ENCODE measurements at regions of chr4 and their contacts with region 1.

Region 1: DNA sequence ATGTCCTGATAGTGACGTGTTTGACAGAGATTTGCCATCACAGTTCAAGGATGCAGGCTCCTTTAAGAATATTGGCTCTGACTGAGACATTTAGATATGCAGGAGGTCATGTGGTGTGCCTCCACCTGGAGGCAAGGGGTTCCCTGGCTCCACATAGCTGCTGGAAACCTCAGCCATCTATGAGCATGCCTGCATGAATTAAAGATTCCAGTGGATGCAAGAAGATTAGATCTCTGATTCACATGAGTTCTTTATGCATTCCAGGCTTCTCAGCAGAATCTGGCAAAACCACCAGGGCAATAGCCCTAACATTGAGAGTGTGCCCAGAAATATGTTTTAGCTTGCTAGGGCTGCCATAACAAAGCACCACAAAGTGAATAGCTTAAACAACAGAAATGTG is 298.5 kb upstream of the AADAT start:
- DNase-seq: no peak
- H3K4me3 ChIP-seq: no peak overlapping the region
- H3K27ac ChIP-seq: no peak overlapping the region
- H3K4me1 ChIP-seq: no peaks in the 10 kb centered on the region
- H3K27me3 ChIP-seq: no peaks in the 10 kb centered on the region
- CTCF ChIP-seq: no peak
- EP300 ChIP-seq: no peak
- POLR2A ChIP-seq: no peak

Region 2: GRCh38 chr4:170374770-170375169 is 13.5 kb before region 1 on chr4:
- intact Hi-C with region 1: loop called in 1 of 4 experiments (anchors 2 kb)
- DNase-seq: no peak
- H3K4me3 ChIP-seq: no peak overlapping the region
- H3K27ac ChIP-seq: no peak overlapping the region
- H3K4me1 ChIP-seq: no peaks in the 10 kb centered on the region
- H3K27me3 ChIP-seq: no peaks in the 10 kb centered on the region
- CTCF ChIP-seq: no peak
- EP300 ChIP-seq: no peak
- POLR2A ChIP-seq: no peak

Region 3: DNA sequence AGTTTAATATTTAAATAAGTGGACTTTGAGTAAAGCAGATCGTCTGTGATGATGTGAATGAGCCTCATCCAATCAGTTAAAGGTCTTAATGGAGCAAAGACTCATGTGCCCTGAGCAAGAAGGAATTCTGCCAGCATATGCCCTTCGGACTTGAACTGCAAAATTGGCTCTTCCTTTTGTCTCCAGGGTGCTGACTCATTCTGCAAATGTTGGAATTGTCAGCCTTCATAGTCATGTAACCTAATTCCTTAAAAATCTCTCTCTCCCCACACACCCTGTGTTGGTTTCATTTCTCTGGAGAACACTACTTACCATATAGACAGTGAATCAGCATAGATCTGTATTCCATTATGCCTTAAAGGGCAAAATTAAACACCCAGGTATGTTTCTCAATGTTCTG is 815.2 kb after region 1 on chr4:
- intact Hi-C with region 1: no loop called
- DNase-seq: no peak
- H3K4me3 ChIP-seq: no peak overlapping the region
- H3K27ac ChIP-seq: no peak overlapping the region
- H3K4me1 ChIP-seq: no peaks in the 10 kb centered on the region
- H3K27me3 ChIP-seq: no peaks in the 10 kb centered on the region
- CTCF ChIP-seq: no peak
- EP300 ChIP-seq: no peak
- POLR2A ChIP-seq: no peak

Region 4: DNA sequence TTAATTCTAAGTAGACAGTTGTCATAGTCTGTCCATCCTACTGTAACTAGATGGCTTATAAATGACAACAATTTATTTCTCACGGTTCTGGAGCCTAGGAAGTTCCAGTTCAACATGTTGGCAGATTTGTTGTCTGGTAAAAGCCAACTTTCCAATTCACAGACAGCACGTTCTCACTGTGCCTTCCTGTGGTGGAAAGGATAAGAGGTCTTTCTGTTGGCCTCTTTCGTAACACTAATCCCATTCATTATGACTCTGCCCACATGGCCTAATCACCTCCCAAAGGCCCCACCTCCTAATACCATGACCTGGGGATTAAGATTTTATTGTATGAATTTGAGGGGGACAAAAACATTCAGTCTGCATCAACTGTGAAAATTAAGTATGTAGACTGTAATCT is 1508.2 kb after region 1 on chr4:
- intact Hi-C with region 1: no loop called
- DNase-seq: no peak
- H3K4me3 ChIP-seq: no peak overlapping the region
- H3K27ac ChIP-seq: no peak overlapping the region
- H3K4me1 ChIP-seq: no peaks in the 10 kb centered on the region
- H3K27me3 ChIP-seq: no peaks in the 10 kb centered on the region
- CTCF ChIP-seq: no peak
- EP300 ChIP-seq: no peak
- POLR2A ChIP-seq: no peak